Activated CD4-positive, alpha-beta T cell treated with anti-CD3 and anti-CD28 coated beads, Interleukin-2, amount 10 ng/mL, durations not matched to agents 24 days and 14 days (primary cell): ENCODE measurements at regions of chr17 and their contacts with region 1.

Region 1: GRCh38 chr17:74742153-74742515 is 5.1 kb downstream of the RAB37 start:
- DNase-seq: peak; percentile 92
- H3K4me3 Mint-ChIP-seq: peak overlapping the region; percentile 81
- H3K27ac Mint-ChIP-seq: peak overlapping the region; percentile 93
- H3K4me1 Mint-ChIP-seq: peaks cover 78% of the 10 kb centered on the region
- H3K27me3 Mint-ChIP-seq: no peaks in the 10 kb centered on the region

Region 2: GRCh38 chr17:74677558-74678466 is 64.3 kb before region 1 on chr17:
- intact Hi-C with region 1: no loop called
- DNase-seq: peak; percentile 64
- H3K4me3 Mint-ChIP-seq: no peak overlapping the region
- H3K27ac Mint-ChIP-seq: no peak overlapping the region
- H3K4me1 Mint-ChIP-seq: peaks cover 15% of the 10 kb centered on the region
- H3K27me3 Mint-ChIP-seq: peaks cover 44% of the 10 kb centered on the region

Region 3: GRCh38 chr17:74759243-74759801 is 17.2 kb after region 1 on chr17:
- intact Hi-C with region 1: loop called (anchors 2 kb)
- DNase-seq: peak; percentile 89
- H3K4me3 Mint-ChIP-seq: peak overlapping the region; percentile 74
- H3K27ac Mint-ChIP-seq: peak overlapping the region; percentile 78
- H3K4me1 Mint-ChIP-seq: peaks cover 55% of the 10 kb centered on the region
- H3K27me3 Mint-ChIP-seq: no peaks in the 10 kb centered on the region